ENCODE measurements at regions of chr9 and their contacts with region 1.

Region 1: DNA sequence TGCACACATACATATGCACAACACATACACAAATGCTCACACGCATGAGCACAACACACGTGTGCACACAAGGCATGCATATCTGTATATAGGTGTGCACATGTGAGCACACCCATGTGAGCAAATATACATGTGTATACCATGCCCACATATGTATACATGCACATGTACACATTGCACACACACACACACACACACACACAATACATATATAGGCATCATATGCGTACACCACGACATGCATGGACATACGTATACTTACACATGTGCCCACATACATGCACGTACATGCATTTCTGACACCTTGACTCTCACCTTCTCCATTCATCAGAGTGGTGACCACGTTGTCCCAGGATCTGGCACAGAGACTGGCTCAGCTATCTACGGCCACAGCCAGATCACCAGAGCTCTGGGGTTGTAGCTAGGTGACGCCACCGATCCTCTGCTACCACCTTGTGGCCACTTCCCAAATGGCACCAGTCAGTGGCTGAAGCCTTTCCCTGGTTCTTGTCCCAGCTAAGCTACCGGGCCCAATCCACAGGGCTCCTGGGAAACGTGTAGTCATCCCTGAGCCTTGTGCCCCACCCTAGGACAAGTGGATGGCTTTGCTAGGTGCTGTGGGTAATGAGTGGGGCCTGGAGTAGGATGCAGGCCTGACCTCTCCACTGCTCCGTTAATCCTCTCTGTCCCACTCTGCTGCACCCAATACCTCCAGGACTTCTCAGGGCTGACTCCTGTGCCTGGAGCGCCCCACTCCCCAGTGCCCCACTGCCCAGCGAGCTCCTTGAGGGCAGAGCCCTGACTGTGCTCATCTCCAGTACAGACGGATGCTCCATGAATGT is 194.4 kb downstream of the RGS3 start:
- DNase-seq: peak; percentile 80 to 96
- H3K4me3 ChIP-seq: no peak overlapping the region
- CTCF ChIP-seq: peak in 1 of 3 donors; percentile 80
- POLR2A ChIP-seq: no peak

Region 2: DNA sequence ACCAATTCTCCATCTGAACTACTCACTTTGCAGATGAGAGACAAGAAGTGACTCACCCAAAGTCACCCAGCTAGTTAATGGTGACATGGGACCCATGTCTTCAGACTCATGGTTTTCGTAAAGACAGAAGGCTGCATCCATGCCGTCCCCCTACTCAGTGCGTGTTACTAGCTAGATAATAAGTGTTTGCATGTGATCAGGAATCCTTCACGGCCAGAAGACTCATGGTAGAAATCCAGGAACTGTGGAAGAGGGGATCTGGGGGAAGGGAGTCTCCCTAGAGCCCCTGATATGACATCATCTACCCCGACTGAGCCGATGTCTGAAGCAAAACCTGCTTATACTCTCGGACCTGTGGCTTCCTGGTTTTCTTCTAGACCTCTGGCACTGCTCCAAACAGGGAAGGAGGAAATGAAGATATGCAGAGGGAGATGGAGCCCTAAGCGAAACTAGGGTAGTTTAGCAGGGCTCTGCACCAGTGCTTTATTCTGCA is 358.1 kb before region 1 on chr9:
- intact Hi-C with region 1: loop called (anchors 10 kb)
- DNase-seq: no peak
- H3K4me3 ChIP-seq: no peak overlapping the region
- CTCF ChIP-seq: no peak
- POLR2A ChIP-seq: no peak

Region 3: DNA sequence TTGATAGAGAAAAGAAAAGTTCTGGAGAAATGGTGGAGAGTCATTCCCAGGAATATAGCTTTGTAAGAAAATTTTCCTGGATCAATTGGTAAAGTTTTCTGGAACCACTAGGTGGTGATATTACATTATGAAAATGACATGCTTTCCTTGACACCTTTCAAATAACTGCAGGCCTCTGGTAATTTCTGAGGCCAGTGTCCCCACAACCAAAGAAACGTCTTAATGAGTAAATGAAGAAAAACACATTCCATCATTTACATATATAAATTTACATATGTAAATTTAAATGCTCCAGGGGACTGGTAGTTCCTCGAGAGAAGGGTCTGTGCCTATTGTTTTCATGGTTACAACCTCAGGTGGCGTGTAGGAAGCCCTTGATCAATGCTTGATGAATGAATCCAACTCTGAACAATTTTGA is 211.6 kb before region 1 on chr9:
- intact Hi-C with region 1: loop called (anchors 5 kb)
- DNase-seq: no peak
- H3K4me3 ChIP-seq: no peak overlapping the region
- CTCF ChIP-seq: no peak
- POLR2A ChIP-seq: no peak

Region 4: GRCh38 chr9:113591001-113591898 is 66.7 kb before region 1 on chr9:
- intact Hi-C with region 1: loop called (anchors 2 kb)
- DNase-seq: peak; percentile 80 to 97
- H3K4me3 ChIP-seq: no peak overlapping the region
- CTCF ChIP-seq: peak in 1 of 3 donors; percentile 87
- POLR2A ChIP-seq: no peak

Region 5: DNA sequence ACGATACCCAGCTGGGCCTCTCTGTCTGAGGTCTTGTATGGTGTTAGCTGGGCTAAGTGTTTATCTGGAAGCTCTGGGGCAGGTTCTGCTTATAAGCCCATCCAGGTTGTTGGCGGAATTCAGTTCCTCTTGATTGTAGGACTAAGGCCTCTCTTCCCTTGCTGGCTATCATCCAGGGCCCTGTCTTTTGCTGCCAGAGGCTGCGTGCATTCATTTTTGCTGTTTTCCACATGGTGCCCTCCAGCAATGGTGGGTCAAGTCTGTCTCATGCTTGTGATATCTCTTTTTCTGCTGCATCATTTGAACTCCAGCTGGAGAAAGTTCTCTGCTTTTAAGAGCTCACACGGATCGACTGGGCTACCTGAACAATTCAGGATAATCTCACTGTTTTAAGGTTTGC is 112.5 kb after region 1 on chr9:
- intact Hi-C with region 1: no loop called
- DNase-seq: no peak
- H3K4me3 ChIP-seq: no peak overlapping the region
- CTCF ChIP-seq: no peak
- POLR2A ChIP-seq: no peak

Measured in lower leg skin (tissue), 4 donors.